ENCODE measurements at regions of chr16 and their contacts with region 1.

Region 1: DNA sequence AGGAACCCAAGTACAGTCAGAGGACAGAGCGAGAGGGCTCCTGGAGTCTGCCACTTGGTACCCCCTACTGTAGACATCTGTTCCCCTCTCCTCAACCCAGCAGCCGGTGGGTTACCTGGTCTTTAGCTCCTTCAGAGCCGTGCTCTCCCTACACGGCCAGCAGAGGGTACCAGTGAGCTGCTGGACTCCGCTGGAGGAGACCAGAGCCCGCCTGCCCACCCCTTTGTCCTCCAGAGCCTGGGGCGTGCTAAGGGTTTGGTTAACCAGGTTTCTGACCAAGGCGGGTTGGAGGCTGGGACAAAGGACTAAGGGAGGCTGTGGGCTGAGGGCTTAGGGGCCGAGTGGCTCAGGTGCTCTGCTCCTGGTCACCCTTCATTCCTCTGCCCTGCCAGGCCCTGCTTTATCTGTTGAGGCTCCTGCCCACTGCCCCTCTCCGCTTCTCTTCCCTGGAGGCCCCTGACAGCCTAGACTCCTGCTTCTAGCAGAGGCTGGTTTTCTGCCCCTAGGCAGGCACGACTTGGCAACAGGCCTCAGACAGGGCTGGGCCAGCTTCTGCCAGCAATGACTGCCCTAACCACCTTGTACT is 2.7 kb upstream of the HSD11B2 start:
- DNase-seq: peak; percentile 80
- ATAC-seq: peak; percentile 68 to 76

Region 2: GRCh38 chr16:67468731-67469130 is 40.5 kb after region 1 on chr16:
- intact Hi-C with region 1: loop called (anchors 5 kb)
- DNase-seq: no peak
- ATAC-seq: no peak